CD14-positive monocyte (primary cell): ENCODE measurements at regions of chr2 and their contacts with region 1.

Region 1: DNA sequence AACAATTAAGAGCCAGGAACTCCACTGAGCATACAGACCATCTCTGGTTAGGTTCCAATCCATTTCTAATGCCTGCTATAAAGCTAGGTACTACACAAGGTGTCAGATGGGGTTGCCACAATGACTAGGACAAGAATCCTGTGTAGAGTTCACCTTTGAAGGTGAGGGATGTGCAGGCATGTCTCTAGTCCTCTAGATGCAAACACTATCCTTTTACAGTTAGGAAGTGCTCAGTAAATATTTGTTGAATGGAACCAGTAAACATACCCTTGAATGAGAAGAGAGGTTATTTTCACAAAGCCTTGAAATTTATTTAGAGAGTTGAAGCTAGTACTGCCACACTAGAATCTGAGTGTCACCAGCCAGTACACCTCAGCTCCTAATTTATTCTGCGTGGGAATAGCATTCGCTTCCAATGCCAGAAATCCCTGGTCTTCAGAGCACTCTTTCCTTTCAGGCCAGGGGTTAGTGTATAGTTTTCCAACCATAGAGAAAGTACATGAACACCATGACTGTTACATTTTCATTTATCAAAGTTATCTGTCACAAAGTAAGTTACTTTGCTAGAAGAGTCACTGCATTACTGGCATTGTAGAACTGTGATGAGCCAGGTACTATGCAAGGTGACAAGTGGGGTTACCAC is 48.3 kb downstream of the STAT1 start:
- DNase-seq: no peak
- H3K4me3 ChIP-seq: no peak overlapping the region
- H3K4me3 Mint-ChIP-seq: no peak overlapping the region
- H3K27ac ChIP-seq: no peak overlapping the region
- H3K27ac Mint-ChIP-seq: peak overlapping the region in 1 of 7 donors; percentile 65
- H3K4me1 ChIP-seq: peaks cover 6 to 9% of the 10 kb centered on the region in 2 donors
- H3K4me1 Mint-ChIP-seq: peaks cover 9% of the 10 kb centered on the region
- H3K27me3 ChIP-seq: no peaks in the 10 kb centered on the region
- H3K27me3 Mint-ChIP-seq: no peaks in the 10 kb centered on the region
- CTCF ChIP-seq: no peak

Region 2: GRCh38 chr2:190911813-190912212 is 53.9 kb before region 1 on chr2:
- intact Hi-C with region 1: no loop called
- DNase-seq: no peak
- H3K4me3 ChIP-seq: no peak overlapping the region
- H3K4me3 Mint-ChIP-seq: no peak overlapping the region
- H3K27ac ChIP-seq: no peak overlapping the region
- H3K27ac Mint-ChIP-seq: no peak overlapping the region
- H3K4me1 ChIP-seq: no peaks in the 10 kb centered on the region
- H3K4me1 Mint-ChIP-seq: no peaks in the 10 kb centered on the region
- H3K27me3 ChIP-seq: no peaks in the 10 kb centered on the region
- H3K27me3 Mint-ChIP-seq: no peaks in the 10 kb centered on the region
- CTCF ChIP-seq: no peak

Region 3: DNA sequence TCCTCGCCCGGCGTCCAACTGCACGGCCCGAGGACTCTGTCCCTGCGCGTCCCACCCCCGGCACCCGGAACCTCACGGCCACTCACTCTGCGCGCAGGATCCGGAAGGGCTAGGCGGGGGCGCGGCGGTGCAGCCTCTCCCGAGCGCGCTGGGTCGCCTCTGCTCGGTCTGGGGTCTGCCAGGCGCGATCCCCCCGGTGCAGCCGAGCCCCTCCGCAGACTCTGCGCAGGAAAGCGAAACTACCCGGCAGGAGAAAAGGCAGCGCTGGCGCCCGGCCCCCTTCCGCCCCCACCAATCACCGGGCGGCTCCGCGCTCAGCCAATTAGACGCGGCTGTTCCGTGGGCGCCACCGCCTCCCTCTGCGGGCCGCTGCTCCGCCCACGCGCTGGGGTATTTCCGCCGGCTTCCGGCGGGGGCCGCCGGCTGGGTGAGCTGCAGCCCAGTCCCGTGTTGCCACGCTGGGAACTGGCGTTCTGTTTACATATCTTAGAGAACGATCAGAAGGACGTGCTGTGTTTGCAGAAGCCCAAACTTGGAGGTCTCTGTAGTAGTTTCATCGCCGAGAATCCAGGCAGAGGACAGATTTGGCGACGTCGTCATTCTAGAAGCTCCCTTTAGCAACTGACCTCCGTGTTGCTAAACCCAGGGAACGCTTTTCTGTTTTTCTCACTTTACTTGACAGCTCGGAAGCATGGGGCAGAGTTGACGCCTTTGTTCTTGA is 48.4 kb after region 1 on chr2 and contains the start of gene STAT1:
- intact Hi-C with region 1: loop called in 1 of 2 experiments (anchors 5 kb)
- DNase-seq: peak; percentile 90 to 91 (median 91)
- H3K4me3 ChIP-seq: peak within 1 kb of the TSS; percentile 73 to 99 (median 81)
- H3K4me3 Mint-ChIP-seq: no peak within 1 kb of the TSS
- H3K27ac ChIP-seq: peak within 1 kb of the TSS; percentile 84 to 90
- H3K27ac Mint-ChIP-seq: no peak within 1 kb of the TSS
- H3K4me1 ChIP-seq: peaks cover 36 to 38% of the 10 kb centered on the region in 2 donors
- H3K4me1 Mint-ChIP-seq: peaks cover 10% of the 10 kb centered on the region
- H3K27me3 ChIP-seq: no peaks in the 10 kb centered on the region
- H3K27me3 Mint-ChIP-seq: peaks cover 0 to 2% (median 0%) of the 10 kb centered on the region in 3 donors
- CTCF ChIP-seq: no peak
- polyA plus RNA-seq, gene STAT1: 51.3 to 126 (median 110) TPM